HEK293 (cell line): ENCODE measurements at regions of chr1 and their contacts with region 1.

Region 1: GRCh38 chr1:219427403-219427802 is 185.5 kb downstream of the ZC3H11B start:
- H3K4me3 ChIP-seq: no peak overlapping the region
- H3K27ac ChIP-seq: no peak overlapping the region
- H3K4me1 ChIP-seq: no peaks in the 10 kb centered on the region
- CTCF ChIP-seq: no peak

Region 2: GRCh38 chr1:219416594-219417238 is 10.7 kb before region 1 on chr1:
- CTCF ChIA-PET with region 1: interaction called, 24 read pairs
- POLR2A ChIA-PET with region 1: no interaction called
- H3K4me3 ChIP-seq: no peak overlapping the region
- H3K27ac ChIP-seq: no peak overlapping the region
- H3K4me1 ChIP-seq: no peaks in the 10 kb centered on the region
- CTCF ChIP-seq: peak; percentile 42; the same call in 1 of the 2 replicates

Region 3: DNA sequence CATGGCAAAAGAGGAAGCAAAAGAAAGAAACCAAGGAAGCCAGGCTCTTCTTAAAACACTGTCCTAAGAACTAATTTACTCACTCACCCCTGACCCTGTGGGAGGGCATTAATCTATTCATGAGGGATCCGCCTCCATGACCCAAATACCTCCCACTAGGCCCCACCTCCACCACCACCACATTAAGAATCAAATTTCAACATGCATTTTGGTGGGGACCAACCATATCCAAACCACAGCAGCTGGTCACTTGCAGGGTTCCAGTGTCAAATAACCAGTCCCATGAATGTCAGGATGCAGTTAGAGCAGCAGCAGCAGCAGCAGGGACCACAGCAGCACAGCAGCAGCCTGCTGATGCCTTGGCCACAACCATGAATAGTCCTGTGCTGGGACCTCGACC is 101.7 kb after region 1 on chr1:
- CTCF ChIA-PET with region 1: no interaction called
- POLR2A ChIA-PET with region 1: no interaction called
- H3K4me3 ChIP-seq: no peak overlapping the region
- H3K27ac ChIP-seq: no peak overlapping the region
- H3K4me1 ChIP-seq: no peaks in the 10 kb centered on the region
- CTCF ChIP-seq: no peak